ENCODE measurements at regions of chr20 and their contacts with region 1.

Region 1: DNA sequence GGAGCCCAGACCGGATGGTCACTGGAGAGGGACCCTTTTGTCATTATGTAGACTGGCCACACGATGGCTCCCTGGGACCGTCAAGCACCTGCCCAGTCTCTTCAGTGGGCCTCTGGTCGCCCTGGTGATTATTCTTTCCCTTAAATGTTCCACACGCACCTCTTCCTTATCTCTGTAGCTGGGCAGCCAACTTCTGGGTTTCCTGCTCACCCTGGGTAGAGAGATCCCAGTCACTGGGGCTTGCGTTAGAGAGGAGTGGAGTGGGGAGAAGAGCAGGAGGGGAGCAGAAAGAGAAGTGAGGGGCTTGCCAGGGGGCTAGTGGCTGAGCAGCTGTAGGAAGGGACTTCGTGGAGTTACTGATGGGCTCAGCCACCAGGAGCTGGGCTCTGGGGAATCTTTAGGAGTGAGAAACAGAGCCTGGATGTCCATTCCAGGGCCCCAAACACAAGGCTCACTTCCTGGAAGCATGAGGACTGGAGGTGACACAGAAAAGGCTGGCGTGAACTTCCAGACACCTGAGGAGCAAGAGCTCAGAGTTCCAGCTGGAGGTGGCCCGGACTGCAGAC is 150.1 kb downstream of the DHX35 start:
- DNase-seq: peak; percentile 54 to 73
- H3K4me3 ChIP-seq: no peak overlapping the region
- H3K27ac ChIP-seq: no peak overlapping the region
- H3K4me1 ChIP-seq: peaks cover 1 to 14% (median 5%) of the 10 kb centered on the region in 4 experiments; a peak in 6 of 7 replicates
- H3K27me3 ChIP-seq: no peaks in the 10 kb centered on the region
- CTCF ChIP-seq: peak; percentile 76 to 86 (median 80)
- EP300 ChIP-seq: no peak
- POLR2A ChIP-seq: no peak
- RAD21 ChIP-seq: peak; percentile 96 to 97

Region 2: DNA sequence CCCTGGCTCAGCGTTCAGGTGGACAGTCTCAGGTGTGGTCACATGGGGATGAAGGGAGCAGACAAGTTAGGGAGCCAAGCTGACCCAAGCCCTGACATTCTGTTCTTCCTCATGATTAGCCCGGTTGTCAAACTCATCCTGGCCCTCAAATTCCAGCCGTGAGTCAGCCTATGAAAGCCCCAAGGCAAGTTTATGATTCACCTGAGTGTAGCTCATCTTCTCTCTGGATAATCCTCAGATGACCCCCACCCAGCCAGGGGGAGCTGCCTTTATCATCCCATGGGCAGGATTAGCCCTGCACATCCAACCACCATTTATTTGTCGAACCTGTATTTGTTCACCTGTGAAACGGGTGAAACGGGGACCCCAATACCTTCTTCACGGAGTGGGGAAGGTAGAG is 11.8 kb after region 1 on chr20:
- CTCF ChIA-PET with region 1: interaction called, 51 read pairs
- POLR2A ChIA-PET with region 1: interaction called, 4 read pairs
- DNase-seq: no peak
- H3K4me3 ChIP-seq: no peak overlapping the region
- H3K27ac ChIP-seq: no peak overlapping the region
- H3K4me1 ChIP-seq: peaks cover 8 to 22% (median 12%) of the 10 kb centered on the region in 4 experiments
- H3K27me3 ChIP-seq: peaks cover 0 to 11% (median 6%) of the 10 kb centered on the region in 4 experiments; a peak in 5 of 7 replicates
- CTCF ChIP-seq: no peak
- EP300 ChIP-seq: no peak
- POLR2A ChIP-seq: no peak
- RAD21 ChIP-seq: no peak

Region 3: DNA sequence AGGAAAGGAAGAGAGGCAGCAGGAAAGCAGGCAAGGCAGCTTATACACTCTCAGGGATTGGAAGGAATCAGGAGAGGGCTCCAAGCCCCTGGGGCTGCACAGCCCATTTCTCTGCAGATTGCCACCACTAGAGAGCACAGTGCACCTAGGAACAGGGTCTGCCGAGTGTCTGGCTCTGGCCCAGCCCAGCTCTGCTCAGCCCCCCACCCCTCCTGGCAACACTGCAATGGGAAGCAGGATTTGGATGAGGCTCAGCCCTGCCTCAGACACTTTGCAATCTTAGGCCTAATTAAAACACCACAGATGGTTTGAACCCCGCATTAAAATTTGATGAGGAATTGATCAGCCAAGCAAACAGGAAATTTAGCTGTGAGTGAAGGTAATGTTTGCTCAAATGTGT is 102.6 kb after region 1 on chr20:
- CTCF ChIA-PET with region 1: interaction called, 22 read pairs
- POLR2A ChIA-PET with region 1: no interaction called
- DNase-seq: no peak
- H3K4me3 ChIP-seq: no peak overlapping the region
- H3K27ac ChIP-seq: no peak overlapping the region
- H3K4me1 ChIP-seq: peaks cover 0 to 5% (median 1%) of the 10 kb centered on the region in 4 experiments; a peak in 2 of 7 replicates
- H3K27me3 ChIP-seq: peaks cover 7 to 9% (median 8%) of the 10 kb centered on the region in 4 experiments; a peak in 5 of 7 replicates
- CTCF ChIP-seq: peak; percentile 35 to 54 (median 37)
- EP300 ChIP-seq: no peak
- POLR2A ChIP-seq: no peak
- RAD21 ChIP-seq: peak; percentile 64 to 67

Region 4: GRCh38 chr20:39253051-39253755 is 140.9 kb after region 1 on chr20:
- CTCF ChIA-PET with region 1: interaction called, 16 read pairs
- POLR2A ChIA-PET with region 1: no interaction called
- DNase-seq: no peak
- H3K4me3 ChIP-seq: no peak overlapping the region
- H3K27ac ChIP-seq: no peak overlapping the region
- H3K4me1 ChIP-seq: no peaks in the 10 kb centered on the region
- H3K27me3 ChIP-seq: no peaks in the 10 kb centered on the region
- CTCF ChIP-seq: no peak
- EP300 ChIP-seq: no peak
- POLR2A ChIP-seq: no peak
- RAD21 ChIP-seq: no peak

Measured in H1 (cell line).